Dorsolateral prefrontal cortex (tissue), 120 donors: ENCODE measurements at regions of chr2 and their contacts with region 1.

Region 1: DNA sequence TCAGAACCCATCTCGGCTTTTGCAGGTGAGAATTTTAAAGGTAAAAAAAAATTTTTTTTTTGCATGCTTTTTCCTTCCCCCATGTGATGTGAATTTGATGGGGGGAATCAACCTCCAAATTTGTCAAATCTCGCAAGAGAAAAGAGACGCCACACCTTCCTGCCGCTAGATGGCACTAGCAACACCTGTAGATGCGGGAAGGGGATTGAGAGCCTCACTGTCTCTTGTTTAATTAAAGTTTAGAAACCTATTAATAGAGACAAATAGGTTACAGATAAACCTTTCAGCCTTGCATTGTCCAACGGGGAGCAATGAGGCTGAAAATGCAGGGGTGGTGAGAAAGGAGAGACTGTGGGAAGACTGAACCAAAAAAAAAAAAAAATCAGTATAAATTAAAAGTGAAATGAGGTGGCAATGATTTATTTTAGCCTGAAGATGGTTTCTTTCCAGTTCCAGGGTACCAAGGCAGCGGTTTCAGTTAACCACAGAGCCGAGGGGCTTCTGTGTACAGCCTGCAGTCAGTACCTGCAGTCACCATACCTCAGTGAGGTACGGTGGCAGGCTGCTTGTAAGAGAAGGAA is 84.6 kb downstream of the NRP2 start:
- DNase-seq: peak; percentile 46 to 82 (median 61)
- H3K4me3 ChIP-seq: no peak overlapping the region
- H3K27ac ChIP-seq: no peak overlapping the region
- H3K27me3 ChIP-seq: peaks cover 0 to 5% (median 0%) of the 10 kb centered on the region in 45 donors
- CTCF ChIP-seq: peak; percentile 62 to 90 (median 81)

Region 2: GRCh38 chr2:205868773-205869333 is 102.0 kb after region 1 on chr2:
- intact Hi-C with region 1: no loop called
- DNase-seq: no peak
- H3K4me3 ChIP-seq: no peak overlapping the region
- H3K27ac ChIP-seq: no peak overlapping the region
- H3K27me3 ChIP-seq: peaks cover 0 to 3% (median 0%) of the 10 kb centered on the region in 45 donors
- CTCF ChIP-seq: no peak

Region 3: GRCh38 chr2:205885492-205886099 is 118.7 kb after region 1 on chr2:
- intact Hi-C with region 1: loop called (anchors 2 to 10 kb)
- DNase-seq: peak; percentile 18 to 79 (median 65)
- H3K4me3 ChIP-seq: no peak overlapping the region
- H3K27ac ChIP-seq: no peak overlapping the region
- H3K27me3 ChIP-seq: peaks cover 0 to 21% (median 0%) of the 10 kb centered on the region in 45 donors
- CTCF ChIP-seq: peak; percentile 49 to 90 (median 79)

Region 4: GRCh38 chr2:205925373-205926337 is 158.8 kb after region 1 on chr2:
- intact Hi-C with region 1: loop called (anchors 2 to 5 kb)
- DNase-seq: peak; percentile 44 to 84 (median 58)
- H3K4me3 ChIP-seq: peak overlapping the region in 41 of 59 donors; percentile 4 to 52 (median 28)
- H3K27ac ChIP-seq: no peak overlapping the region
- H3K27me3 ChIP-seq: peaks cover 0 to 35% (median 12%) of the 10 kb centered on the region in 45 donors
- CTCF ChIP-seq: peak; percentile 61 to 98 (median 90)

Region 5: DNA sequence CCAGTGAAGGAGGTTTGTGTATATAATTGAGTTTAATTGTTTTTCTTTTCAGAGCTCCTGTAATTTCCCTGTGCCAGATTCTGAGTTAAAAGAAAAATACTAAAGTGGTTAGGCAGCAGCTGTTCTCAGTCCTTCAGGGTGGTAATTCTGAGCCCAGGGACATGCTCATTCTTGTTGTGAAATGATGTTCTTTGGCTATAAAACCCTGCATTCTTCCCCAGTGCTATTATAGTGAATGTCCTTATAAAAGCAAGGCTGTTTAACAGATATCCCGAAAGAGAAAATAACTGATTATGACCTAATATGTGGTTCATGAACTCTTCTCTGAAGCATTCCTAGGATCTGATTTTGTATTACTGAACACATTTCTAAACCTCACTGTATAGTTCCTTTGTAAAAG is 710.4 kb after region 1 on chr2:
- intact Hi-C with region 1: no loop called
- DNase-seq: no peak
- H3K4me3 ChIP-seq: no peak overlapping the region
- H3K27ac ChIP-seq: no peak overlapping the region
- H3K27me3 ChIP-seq: no peaks in the 10 kb centered on the region
- CTCF ChIP-seq: no peak

Region 6: GRCh38 chr2:206627632-206628031 is 860.8 kb after region 1 on chr2:
- intact Hi-C with region 1: no loop called
- DNase-seq: no peak
- H3K4me3 ChIP-seq: no peak overlapping the region
- H3K27ac ChIP-seq: no peak overlapping the region
- H3K27me3 ChIP-seq: peaks cover 0 to 11% (median 0%) of the 10 kb centered on the region in 45 donors
- CTCF ChIP-seq: no peak